ENCODE measurements at regions of chr16 and their contacts with region 1.

Region 1: GRCh38 chr16:89700100-89700648 is 1.3 kb downstream of the SPATA2L start:
- DNase-seq: peak; percentile 100
- ATAC-seq: peak; percentile 60
- H3K4me3 ChIP-seq: peak overlapping the region; percentile 76 to 90
- H3K27ac ChIP-seq: peak overlapping the region; percentile 88
- H3K4me1 ChIP-seq: peaks cover 15 to 27% of the 10 kb centered on the region in 2 experiments
- H3K27me3 ChIP-seq: no peaks in the 10 kb centered on the region
- CTCF ChIP-seq: peak in 2 of 3 experiments; percentile 57 to 74; a peak in 4 of 6 replicates
- POLR2A ChIP-seq: no peak
- RAD21 ChIP-seq: no peak

Region 2: DNA sequence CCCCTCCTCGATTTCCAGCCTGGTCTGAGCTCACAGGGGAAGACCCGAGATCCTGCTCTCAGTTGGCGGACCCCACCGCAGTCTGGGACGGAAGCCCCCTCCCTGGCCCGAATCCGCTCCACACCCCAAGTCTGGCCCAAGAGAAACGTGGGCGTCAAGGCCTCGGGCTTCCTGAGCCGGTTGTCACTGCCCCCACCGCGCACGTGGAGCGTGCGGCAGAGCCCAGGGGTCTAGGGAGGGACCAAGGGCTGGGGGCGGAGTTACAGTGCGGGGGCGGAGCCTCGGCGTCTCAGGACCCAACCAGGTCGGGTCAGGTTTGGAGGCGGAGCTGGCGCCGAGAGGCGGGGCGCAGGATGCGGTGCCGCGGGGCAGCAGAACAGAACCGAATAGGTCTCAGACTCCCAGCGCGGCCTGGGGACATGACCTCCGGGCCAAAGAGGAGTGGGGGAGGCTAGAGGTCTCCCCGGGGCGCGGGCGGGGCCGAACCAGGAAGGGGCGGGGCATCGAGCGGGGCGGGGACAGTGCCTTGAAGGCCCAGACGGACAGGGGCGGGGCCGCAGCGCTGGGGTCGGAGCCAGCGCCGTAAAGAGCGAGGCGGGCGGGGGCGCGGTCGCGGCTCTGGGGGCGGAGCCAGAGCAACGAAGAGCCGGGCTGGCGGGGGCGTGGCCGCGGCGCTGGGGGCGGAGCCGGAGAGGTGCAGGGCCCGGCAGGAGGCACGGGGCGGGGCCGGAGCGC is 1247.5 kb before region 1 on chr16:
- CTCF ChIA-PET with region 1: no interaction called
- POLR2A ChIA-PET with region 1: no interaction called
- RAD21 ChIA-PET with region 1: no interaction called
- intact Hi-C with region 1: no loop called
- DNase-seq: peak; percentile 92
- ATAC-seq: peak; percentile 75
- H3K4me3 ChIP-seq: peak overlapping the region; percentile 46 to 60
- H3K27ac ChIP-seq: peak overlapping the region; percentile 62
- H3K4me1 ChIP-seq: peaks cover 34 to 56% of the 10 kb centered on the region in 2 experiments
- H3K27me3 ChIP-seq: no peaks in the 10 kb centered on the region
- CTCF ChIP-seq: no peak
- POLR2A ChIP-seq: no peak
- RAD21 ChIP-seq: no peak

Region 3: GRCh38 chr16:89686520-89687091 is 13.6 kb before region 1 on chr16 and contains the start of gene CDK10:
- CTCF ChIA-PET with region 1: interaction called, 14 read pairs
- POLR2A ChIA-PET with region 1: interaction called, 7 read pairs
- RAD21 ChIA-PET with region 1: interaction called in 1 of 2 experiments, 3 read pairs
- intact Hi-C with region 1: loop called (anchors 1 kb)
- DNase-seq: peak; percentile 84
- ATAC-seq: peak; percentile 87
- H3K4me3 ChIP-seq: peak within 1 kb of the TSS; percentile 57 to 85
- H3K27ac ChIP-seq: peak within 1 kb of the TSS; percentile 80
- H3K4me1 ChIP-seq: peaks cover 9 to 20% of the 10 kb centered on the region in 2 experiments
- H3K27me3 ChIP-seq: no peaks in the 10 kb centered on the region
- CTCF ChIP-seq: no peak
- POLR2A ChIP-seq: peak; percentile 78
- RAD21 ChIP-seq: no peak
- total RNA-seq, gene CDK10: 165 TPM

Region 4: DNA sequence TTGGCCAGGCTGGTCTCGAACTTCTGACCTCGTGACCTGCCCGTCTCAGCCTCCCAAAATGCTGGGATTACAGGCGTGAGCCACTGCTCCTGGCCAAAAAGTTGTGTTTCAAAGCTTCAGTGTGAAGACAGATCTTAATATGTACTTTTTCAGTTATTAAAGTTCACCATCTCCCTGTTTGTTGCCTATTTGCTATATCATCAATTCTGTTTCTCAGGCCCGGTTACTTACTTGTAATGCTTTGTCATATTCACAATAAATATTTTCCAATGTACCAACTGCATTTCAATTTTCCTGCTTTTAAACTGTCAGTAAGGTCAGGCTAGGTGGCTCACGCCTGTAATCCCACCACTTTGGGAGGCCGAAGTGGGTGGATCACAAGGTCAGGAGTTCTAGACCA is 93.8 kb after region 1 on chr16:
- CTCF ChIA-PET with region 1: interaction called, 27 read pairs
- POLR2A ChIA-PET with region 1: interaction called, 4 read pairs
- RAD21 ChIA-PET with region 1: no interaction called
- intact Hi-C with region 1: loop called (anchors 1 kb)
- DNase-seq: no peak
- ATAC-seq: no peak
- H3K4me3 ChIP-seq: no peak overlapping the region
- H3K27ac ChIP-seq: no peak overlapping the region
- H3K4me1 ChIP-seq: no peaks in the 10 kb centered on the region
- H3K27me3 ChIP-seq: no peaks in the 10 kb centered on the region
- CTCF ChIP-seq: no peak
- POLR2A ChIP-seq: no peak
- RAD21 ChIP-seq: no peak

Region 5: GRCh38 chr16:89860747-89861304 is 160.7 kb after region 1 on chr16:
- CTCF ChIA-PET with region 1: interaction called, 20 read pairs
- POLR2A ChIA-PET with region 1: interaction called, 4 read pairs
- RAD21 ChIA-PET with region 1: no interaction called
- intact Hi-C with region 1: no loop called
- DNase-seq: peak; percentile 51
- ATAC-seq: peak; percentile 98
- H3K4me3 ChIP-seq: no peak overlapping the region
- H3K27ac ChIP-seq: no peak overlapping the region
- H3K4me1 ChIP-seq: peaks cover 8 to 9% of the 10 kb centered on the region in 2 experiments
- H3K27me3 ChIP-seq: no peaks in the 10 kb centered on the region
- CTCF ChIP-seq: peak; percentile 94 to 100 (median 100)
- POLR2A ChIP-seq: no peak
- RAD21 ChIP-seq: peak; percentile 100